ENCODE measurements at regions of chr6 and their contacts with region 1.

Region 1: DNA sequence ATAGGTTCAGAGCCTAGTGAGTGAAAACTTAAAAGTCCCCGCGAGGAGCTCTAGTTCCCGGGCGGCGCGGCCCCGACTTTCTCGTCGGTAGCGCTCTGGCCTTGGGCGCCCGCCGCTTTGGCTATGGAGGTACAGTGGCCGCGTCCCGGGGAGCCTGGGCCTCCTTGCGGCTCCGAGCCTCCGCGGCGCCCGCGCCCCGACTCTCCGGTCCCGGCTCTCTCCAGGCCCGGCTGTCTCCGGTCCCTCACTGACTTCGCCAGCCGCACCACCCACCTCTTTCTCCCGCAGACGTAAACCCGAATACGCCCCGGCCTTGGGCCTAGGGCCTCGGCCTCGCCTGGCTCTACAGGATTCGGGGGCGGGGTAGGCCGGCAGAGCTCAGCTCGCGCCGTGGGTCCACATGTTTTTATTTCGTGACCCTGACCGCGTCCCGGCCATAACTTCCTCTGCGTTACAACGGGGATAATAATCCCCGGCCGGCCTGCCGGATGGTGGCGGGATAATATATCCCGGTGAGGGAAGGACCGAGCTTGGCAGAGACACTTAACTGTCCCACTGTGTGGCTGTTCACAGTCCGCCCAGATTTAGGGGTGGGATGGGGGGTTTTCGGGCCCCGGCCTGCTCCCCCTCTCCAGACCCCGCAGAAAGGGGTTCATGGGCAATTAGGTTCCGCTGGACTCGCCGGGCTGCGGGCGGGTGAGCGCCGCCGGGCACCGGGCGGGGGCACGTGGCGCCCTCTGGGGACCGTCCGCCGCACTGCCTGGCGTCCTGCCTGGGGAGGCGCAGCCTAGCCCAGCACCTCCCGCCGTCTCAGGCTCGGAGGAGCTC is 10.0 kb upstream of the TBX18 start:
- DNase-seq: peak; percentile 76
- ATAC-seq: peak; percentile 83

Region 2: DNA sequence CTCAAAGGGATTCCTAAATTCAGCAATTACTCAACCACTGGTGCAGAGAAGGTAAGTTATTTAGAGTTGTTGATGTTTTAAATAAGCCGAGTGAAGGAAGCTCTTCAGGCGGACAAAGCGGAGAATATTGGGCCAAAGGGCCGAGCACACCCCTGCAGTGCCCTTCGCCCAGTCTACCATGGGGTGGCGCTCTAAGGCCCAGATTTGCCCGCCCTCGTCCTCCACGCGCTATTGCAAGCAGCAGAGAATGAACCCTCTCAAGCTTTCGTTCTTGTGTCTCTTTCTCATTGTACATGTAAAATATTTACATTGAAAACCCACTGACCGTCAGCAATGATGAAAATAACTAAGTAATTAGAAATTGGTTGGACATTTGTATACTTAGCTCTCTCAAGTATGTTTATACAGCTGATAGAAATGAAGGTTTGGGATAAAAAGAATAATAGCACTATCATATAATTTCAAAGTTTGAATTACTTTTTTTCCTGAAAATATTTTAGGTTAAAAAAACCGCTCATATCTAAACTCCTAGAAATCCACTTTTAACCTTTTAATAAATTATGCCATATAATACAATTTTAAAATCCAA is 351.9 kb before region 1 on chr6:
- intact Hi-C with region 1: loop called (anchors 5 kb)
- DNase-seq: peak; percentile 67
- ATAC-seq: peak; percentile 94

Region 3: DNA sequence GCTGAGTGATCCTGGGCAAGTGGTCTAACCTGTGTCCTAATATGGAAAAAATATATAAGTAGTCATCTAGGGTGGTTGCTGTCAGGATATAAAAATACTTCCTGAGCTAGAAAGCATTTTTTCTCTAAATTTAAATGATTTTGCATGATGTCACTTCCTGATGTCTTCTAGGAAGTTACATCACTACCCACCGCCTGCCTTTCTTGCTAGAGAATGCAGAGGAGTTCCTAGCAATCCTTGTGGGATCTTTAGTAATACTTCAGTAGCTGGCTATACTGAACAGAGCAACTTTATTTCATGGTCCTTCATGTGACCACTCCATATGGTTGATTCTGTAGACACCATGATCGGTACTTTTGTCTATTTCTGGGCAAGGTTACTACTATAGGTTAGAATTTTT is 318.7 kb before region 1 on chr6:
- intact Hi-C with region 1: no loop called
- DNase-seq: no peak
- ATAC-seq: no peak

Region 4: DNA sequence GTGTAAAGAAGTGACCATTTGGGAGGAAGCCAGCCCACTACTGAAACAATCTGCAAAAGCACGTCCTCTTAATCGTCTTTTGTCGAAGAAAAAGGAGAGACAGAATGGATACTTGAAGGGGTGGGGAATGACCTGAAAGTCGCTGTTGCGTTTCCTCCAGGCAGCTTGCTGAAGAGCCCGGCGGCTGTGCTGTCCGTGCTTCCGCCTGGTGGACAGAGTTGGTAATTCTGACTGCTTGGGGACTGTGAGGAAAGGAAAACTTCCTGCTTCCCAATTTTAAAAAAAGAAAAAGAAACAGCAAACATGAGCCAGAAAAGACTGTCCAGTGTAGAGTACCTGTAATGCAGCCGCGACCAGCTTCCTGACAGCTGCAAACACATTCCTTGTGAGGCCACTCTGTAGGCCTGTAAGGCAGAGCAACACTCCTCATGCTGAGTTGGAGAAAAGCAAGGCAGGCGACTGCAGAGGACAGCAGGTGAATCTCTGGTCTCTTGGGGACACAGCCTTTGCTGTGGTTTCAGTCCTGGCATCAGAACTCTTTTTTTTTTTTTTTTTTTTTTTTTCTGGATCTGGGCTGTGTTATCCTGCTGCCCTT is 241.1 kb after region 1 on chr6:
- intact Hi-C with region 1: loop called (anchors 10 kb)
- DNase-seq: peak; percentile 68
- ATAC-seq: peak; percentile 87

Measured in Right ventricle myocardium inferior (tissue), 1 donor.